ENCODE measurements at regions of chr3 and their contacts with region 1.

Region 1: DNA sequence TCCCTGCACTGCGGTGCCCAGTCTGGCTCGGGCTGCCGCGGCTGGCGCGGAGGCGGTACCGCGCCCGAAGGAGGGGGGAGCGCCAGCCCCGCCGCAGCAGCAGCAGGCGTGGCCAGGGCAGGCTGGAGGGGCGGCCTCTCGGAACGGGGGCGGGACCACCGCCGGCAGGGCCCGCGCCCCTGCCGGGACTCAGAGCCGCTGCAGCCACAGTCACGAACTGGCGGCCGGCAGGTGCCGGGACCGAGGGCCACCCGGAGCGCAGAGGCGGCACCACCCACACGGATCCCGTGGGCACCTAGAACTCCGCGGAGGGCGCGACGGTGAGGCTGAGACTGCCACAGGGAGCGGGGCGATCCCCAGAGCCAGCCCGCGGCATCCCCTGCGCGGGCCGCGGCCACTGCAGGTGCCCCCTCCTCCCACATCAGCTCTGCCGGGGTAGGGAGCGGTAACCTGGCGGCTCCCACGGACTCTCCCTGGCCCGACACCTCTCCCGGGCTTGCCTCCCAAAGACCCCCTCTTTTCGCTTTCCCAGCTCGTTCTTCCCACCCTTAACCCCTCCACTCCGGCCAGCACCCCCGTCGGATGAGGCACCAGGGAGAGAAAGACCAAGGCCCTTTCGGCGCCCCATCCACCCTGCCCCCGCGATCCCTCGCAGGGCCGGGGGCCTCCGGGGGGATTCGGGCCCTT is at the start of gene VWA5B2:
- DNase-seq: no peak
- ATAC-seq: peak; percentile 18 to 29
- H3K4me3 ChIP-seq: peak within 1 kb of the TSS; percentile 29 to 60 (median 52)
- H3K27ac ChIP-seq: no peak within 1 kb of the TSS
- H3K4me1 ChIP-seq: peaks cover 4 to 9% of the 10 kb centered on the region in 2 donors
- H3K27me3 ChIP-seq: peaks cover 33 to 45% (median 36%) of the 10 kb centered on the region in 3 donors
- CTCF ChIP-seq: peak in 2 of 5 experiments; percentile 24 to 32
- POLR2A ChIP-seq: no peak
- total RNA-seq, gene VWA5B2: not detected

Region 2: DNA sequence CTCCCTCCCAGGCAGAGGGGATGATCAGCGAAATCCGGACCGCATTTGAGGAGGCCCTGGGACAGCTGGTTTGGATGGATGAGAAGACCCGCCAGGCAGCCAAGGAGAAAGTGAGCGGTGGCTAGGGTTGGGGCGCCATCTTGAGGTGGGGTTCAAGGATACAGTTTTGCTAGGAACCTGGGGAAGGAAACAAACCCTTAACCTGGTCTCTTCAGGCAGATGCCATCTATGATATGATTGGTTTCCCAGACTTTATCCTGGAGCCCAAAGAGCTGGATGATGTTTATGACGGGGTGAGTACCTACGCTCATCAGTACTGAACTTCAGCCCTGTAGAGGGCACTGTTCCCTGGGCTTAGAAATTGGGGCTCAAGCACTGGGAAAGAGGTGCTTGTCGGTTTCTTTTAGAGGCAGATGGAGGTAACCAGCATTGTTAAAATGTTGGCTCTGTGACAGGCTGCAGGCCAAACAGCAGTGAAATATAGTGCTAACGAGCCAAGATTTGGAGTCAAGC is 59.9 kb after region 1 on chr3:
- in situ Hi-C with region 1: no loop called
- intact Hi-C with region 1: loop called (anchors 5 kb)
- DNase-seq: peak in 1 of 2 donors; percentile 28
- ATAC-seq: peak; percentile 43 to 58
- H3K4me3 ChIP-seq: no peak overlapping the region
- H3K27ac ChIP-seq: no peak overlapping the region
- H3K4me1 ChIP-seq: no peaks in the 10 kb centered on the region
- H3K27me3 ChIP-seq: no peaks in the 10 kb centered on the region
- CTCF ChIP-seq: peak; percentile 26 to 59 (median 49)
- POLR2A ChIP-seq: no peak

Measured in gastrocnemius medialis (tissue), 4 donors.